ENCODE measurements at regions of chr14 and their contacts with region 1.

Region 1: DNA sequence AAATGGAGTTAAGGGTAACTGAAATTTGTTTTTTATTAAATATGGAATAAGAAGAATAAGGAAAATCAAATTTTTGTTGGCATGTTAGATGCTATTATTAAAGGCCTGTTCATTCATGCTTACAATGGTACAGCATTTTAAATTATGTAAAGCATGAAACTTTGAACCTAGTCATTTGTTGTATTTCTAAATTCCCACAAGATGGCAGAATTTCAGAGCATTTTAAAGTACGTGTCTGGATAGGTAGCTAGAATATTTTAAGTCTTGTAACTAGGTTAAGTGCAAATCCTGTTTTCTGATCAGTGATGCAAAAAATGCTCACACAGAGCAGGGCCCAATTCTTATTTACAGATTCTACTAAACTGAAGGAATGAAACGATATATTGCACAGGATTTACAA is 585.6 kb upstream of the MIS18BP1 start:
- DNase-seq: no peak
- ATAC-seq: no peak
- H3K4me3 Mint-ChIP-seq: no peak overlapping the region
- H3K27ac Mint-ChIP-seq: no peak overlapping the region
- H3K4me1 Mint-ChIP-seq: no peaks in the 10 kb centered on the region
- H3K27me3 Mint-ChIP-seq: no peaks in the 10 kb centered on the region

Region 2: DNA sequence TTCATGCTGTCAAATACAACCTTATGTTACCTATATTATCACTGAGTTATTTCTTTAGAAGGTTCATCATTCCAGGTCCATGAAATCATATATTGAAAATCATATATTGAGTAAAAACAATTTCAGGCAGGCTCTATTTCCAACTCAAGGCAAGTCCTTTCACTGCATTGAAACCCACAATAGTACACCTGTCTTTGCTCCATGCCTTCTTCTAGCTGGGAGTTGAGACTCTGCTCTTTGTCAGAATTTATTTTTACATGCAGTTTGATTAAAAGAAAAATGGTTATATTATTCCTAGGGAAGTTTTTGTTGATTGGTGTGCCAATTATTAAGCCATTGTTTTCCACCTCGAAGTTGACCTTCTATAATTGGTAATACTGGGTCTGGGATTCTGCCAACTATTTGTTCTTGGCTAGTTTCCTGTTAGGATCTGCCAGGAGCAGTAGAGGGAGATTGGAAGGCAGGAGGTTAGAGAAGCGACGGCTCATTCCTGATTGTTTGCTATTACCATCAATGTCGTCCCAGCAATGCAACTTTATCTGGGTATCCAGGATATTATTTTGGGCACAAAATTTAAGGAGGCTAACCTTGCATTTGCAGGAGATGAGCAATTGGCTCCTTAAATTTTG is 506.1 kb before region 1 on chr14:
- CTCF ChIA-PET with region 1: no interaction called
- POLR2A ChIA-PET with region 1: no interaction called
- intact Hi-C with region 1: no loop called
- DNase-seq: no peak
- ATAC-seq: no peak
- H3K4me3 Mint-ChIP-seq: no peak overlapping the region
- H3K27ac Mint-ChIP-seq: no peak overlapping the region
- H3K4me1 Mint-ChIP-seq: no peaks in the 10 kb centered on the region
- H3K27me3 Mint-ChIP-seq: no peaks in the 10 kb centered on the region

Region 3: DNA sequence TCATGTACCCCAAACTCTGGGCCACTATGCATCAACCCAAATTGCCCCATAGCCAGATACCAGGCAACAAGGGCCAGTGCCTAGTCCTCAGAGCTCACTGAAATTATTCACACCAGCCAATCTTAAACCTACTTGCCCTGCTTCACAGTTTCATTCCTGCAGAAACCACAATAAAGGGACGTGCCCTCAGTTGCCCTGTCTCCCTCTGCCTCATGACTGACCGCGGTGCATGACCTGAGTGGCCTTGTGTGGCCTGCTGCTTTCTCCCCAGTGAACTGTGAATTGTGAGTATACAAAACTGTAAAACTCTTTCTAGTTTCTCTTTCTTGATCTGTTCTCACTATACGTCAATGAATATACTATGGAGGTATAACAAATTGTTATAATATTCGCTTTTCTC is 94.7 kb before region 1 on chr14:
- CTCF ChIA-PET with region 1: no interaction called
- POLR2A ChIA-PET with region 1: no interaction called
- intact Hi-C with region 1: no loop called
- DNase-seq: no peak
- ATAC-seq: no peak
- H3K4me3 Mint-ChIP-seq: no peak overlapping the region
- H3K27ac Mint-ChIP-seq: no peak overlapping the region
- H3K4me1 Mint-ChIP-seq: no peaks in the 10 kb centered on the region
- H3K27me3 Mint-ChIP-seq: no peaks in the 10 kb centered on the region

Region 4: DNA sequence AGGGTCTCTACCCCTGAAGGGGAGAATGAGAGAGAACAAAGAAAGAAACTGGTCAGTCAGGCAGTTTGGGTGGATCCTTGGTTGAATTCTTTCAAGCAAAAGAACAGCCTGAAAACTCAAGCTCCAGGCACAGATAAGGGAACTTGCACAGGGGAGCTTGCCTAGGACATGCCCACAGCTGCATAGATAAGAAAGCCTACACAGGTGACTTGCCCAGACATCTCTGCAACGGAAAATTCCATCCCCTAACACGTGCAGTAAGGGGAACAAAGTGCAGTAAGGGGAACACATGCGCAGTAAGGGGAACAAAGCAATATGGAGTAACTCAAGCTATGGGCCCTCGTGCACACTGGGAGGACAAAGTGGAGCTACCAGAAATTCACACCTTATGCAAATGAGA is 45.5 kb before region 1 on chr14:
- CTCF ChIA-PET with region 1: no interaction called
- POLR2A ChIA-PET with region 1: no interaction called
- intact Hi-C with region 1: no loop called
- DNase-seq: no peak
- ATAC-seq: no peak
- H3K4me3 Mint-ChIP-seq: no peak overlapping the region
- H3K27ac Mint-ChIP-seq: no peak overlapping the region
- H3K4me1 Mint-ChIP-seq: no peaks in the 10 kb centered on the region
- H3K27me3 Mint-ChIP-seq: no peaks in the 10 kb centered on the region

Region 5: DNA sequence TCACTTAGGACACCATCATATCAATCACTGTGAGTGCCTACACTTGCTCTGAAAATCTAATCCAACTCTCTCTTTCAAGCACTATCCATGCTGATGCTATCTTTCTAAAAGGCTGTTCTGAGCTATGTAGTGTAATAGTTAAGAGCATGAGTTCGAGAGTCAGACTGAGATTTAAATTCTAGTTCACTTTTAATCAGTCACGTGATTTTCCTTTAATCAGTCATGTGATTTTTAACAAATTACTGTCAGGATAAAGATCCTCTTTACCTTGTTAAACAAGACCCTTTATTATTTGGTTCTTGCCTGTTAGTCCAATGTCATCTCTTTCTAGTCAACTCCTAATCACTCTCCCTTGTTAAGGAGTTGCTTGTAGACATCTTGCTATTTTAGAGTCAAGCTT is 160.0 kb after region 1 on chr14:
- CTCF ChIA-PET with region 1: no interaction called
- POLR2A ChIA-PET with region 1: no interaction called
- intact Hi-C with region 1: no loop called
- DNase-seq: no peak
- ATAC-seq: no peak
- H3K4me3 Mint-ChIP-seq: no peak overlapping the region
- H3K27ac Mint-ChIP-seq: no peak overlapping the region
- H3K4me1 Mint-ChIP-seq: no peaks in the 10 kb centered on the region
- H3K27me3 Mint-ChIP-seq: no peaks in the 10 kb centered on the region

Region 6: GRCh38 chr14:46344327-46344937 is 505.8 kb after region 1 on chr14:
- CTCF ChIA-PET with region 1: no interaction called
- POLR2A ChIA-PET with region 1: no interaction called
- intact Hi-C with region 1: loop called in 1 of 2 experiments (anchors 10 kb)
- DNase-seq: peak; percentile 3
- ATAC-seq: no peak
- H3K4me3 Mint-ChIP-seq: no peak overlapping the region
- H3K27ac Mint-ChIP-seq: no peak overlapping the region
- H3K4me1 Mint-ChIP-seq: no peaks in the 10 kb centered on the region
- H3K27me3 Mint-ChIP-seq: no peaks in the 10 kb centered on the region